MCF 10A (cell line): ENCODE measurements at regions of chr1 and their contacts with region 1.

Region 1: GRCh38 chr1:94713472-94714141 is 106.5 kb upstream of the SLC44A3 start:
- DNase-seq: peak; percentile 98
- H3K4me3 Mint-ChIP-seq: no peak overlapping the region
- H3K27ac Mint-ChIP-seq: peak overlapping the region; percentile 97
- H3K4me1 Mint-ChIP-seq: peaks cover 33% of the 10 kb centered on the region
- H3K27me3 Mint-ChIP-seq: no peaks in the 10 kb centered on the region
- CTCF ChIP-seq: no peak

Region 2: DNA sequence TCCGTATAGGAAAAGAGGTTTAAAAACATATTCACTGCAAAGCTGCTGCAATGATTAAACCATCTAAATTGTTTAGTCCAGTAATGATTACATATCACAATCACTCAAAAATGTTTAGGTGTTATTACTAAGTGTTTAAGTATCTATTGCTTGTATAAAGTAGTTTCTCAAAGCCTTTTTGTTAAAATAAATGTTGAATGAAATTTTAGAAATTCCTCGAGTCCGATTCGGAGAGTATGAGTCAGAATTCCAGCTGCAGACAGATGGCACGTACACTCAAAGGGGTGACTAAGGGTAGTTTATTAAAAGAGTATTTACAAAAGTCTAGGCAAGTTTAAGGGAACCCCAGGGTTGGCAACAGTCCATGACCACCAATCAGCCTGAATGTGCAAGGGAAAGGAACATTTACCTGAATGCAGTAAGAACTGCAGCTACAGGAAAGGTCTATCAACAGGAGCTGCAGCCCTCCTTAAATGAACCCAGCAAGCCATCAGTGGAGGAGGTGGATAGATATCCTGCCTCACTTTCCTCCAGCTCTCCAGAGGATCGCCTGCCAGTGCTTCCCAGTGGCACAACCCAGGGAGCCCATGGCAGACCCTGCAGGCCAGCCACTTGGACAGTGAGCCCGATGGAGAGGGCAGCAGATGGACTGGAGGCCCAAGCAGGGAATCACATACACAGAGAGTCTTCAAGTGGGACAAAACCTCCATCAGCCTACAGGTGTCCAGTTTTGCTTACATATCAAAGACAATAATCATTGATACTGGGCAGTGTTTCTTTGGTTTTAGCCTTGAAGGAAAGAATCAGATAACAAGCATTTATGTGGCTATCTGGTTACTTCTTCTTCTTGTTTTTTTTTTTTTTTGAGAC is 14.5 kb after region 1 on chr1:
- CTCF ChIA-PET with region 1: interaction called, 5 read pairs
- POLR2A ChIA-PET with region 1: interaction called, 13 read pairs
- intact Hi-C with region 1: no loop called
- DNase-seq: peak; percentile 85
- H3K4me3 Mint-ChIP-seq: no peak overlapping the region
- H3K27ac Mint-ChIP-seq: no peak overlapping the region
- H3K4me1 Mint-ChIP-seq: peaks cover 39% of the 10 kb centered on the region
- H3K27me3 Mint-ChIP-seq: no peaks in the 10 kb centered on the region
- CTCF ChIP-seq: no peak

Region 3: GRCh38 chr1:94753171-94753972 is 39.8 kb after region 1 on chr1:
- CTCF ChIA-PET with region 1: no interaction called
- POLR2A ChIA-PET with region 1: no interaction called
- intact Hi-C with region 1: no loop called
- DNase-seq: no peak
- H3K4me3 Mint-ChIP-seq: no peak overlapping the region
- H3K27ac Mint-ChIP-seq: no peak overlapping the region
- H3K4me1 Mint-ChIP-seq: peaks cover 8% of the 10 kb centered on the region
- H3K27me3 Mint-ChIP-seq: no peaks in the 10 kb centered on the region
- CTCF ChIP-seq: no peak